HCT116 (cell line): ENCODE measurements at regions of chr3 and their contacts with region 1.

Region 1: GRCh38 chr3:132730891-132731580 is 8.8 kb upstream of the NPHP3 start:
- DNase-seq: no peak
- ATAC-seq: peak; percentile 90
- H3K4me3 ChIP-seq: no peak overlapping the region
- H3K27ac ChIP-seq: no peak overlapping the region
- H3K4me1 ChIP-seq: peaks cover 0 to 7% of the 10 kb centered on the region in 2 experiments; a peak in 2 of 4 replicates
- H3K27me3 ChIP-seq: peaks cover 57% of the 10 kb centered on the region
- CTCF ChIP-seq: peak; percentile 14 to 53 (median 47); a peak in 4 of 6 replicates
- POLR2A ChIP-seq: no peak
- RAD21 ChIP-seq: peak; percentile 80

Region 2: DNA sequence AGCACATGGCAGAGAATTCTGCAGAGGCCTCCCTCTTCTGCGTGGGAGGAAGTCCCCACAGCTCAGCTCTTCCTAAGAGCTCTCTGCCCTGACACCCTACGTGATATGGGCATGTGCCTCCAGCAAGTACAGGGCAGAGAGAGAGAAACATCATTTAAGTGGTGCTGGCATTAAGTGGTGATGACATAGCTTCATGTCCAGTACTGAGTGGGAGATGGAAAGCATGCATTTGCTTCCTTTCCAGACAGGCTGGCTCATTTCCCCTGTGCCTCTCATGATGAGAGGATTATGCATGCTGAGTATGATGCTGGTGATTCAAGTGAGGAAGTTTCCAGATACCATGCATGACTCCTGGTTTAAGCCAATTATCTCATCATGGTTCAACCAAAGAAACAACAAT is 695.7 kb after region 1 on chr3:
- CTCF ChIA-PET with region 1: interaction called, 25 read pairs
- POLR2A ChIA-PET with region 1: no interaction called
- RAD21 ChIA-PET with region 1: interaction called in 1 of 2 experiments, 3 read pairs
- intact Hi-C with region 1: loop called (anchors 1 kb)
- DNase-seq: no peak
- ATAC-seq: no peak
- H3K4me3 ChIP-seq: no peak overlapping the region
- H3K27ac ChIP-seq: no peak overlapping the region
- H3K4me1 ChIP-seq: peaks cover 0 to 3% of the 10 kb centered on the region in 2 experiments; a peak in 2 of 4 replicates
- H3K27me3 ChIP-seq: peaks cover 16% of the 10 kb centered on the region; the same call in 1 of the 2 replicates
- CTCF ChIP-seq: no peak
- POLR2A ChIP-seq: no peak
- RAD21 ChIP-seq: no peak

Region 3: DNA sequence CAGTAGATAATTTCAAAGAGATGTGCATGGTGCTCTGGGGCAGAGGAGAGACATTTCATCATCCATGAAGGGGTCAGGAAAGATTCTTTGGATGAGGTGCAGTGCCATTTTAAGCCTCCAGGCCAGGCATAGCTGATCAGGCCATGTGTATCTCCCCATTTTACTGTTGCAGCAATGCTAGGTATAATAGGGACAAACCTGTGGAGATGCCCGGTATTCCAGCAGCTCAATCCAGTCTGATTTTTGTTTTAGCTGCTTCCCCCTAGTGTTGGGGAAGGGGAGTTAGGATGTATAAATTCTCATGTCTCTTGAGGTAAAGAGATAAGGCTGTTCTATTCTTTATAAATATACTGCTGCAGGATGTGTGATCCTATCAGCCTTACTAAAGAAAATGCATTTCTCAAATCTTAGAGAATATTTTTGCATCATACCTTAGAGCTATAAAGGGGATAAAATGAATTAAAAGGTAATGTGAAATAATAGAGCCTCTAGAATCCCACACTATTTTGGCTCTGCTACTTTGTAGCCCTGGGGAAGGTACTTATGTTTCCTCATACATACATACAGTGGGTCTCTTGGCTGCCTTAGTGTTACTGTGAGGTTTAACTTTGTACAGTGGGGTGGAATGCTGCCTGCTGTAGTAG is 847.6 kb after region 1 on chr3:
- CTCF ChIA-PET with region 1: interaction called, 4 read pairs
- POLR2A ChIA-PET with region 1: no interaction called
- RAD21 ChIA-PET with region 1: no interaction called
- intact Hi-C with region 1: loop called (anchors 5 kb)
- DNase-seq: peak; percentile 59
- ATAC-seq: peak; percentile 69
- H3K4me3 ChIP-seq: no peak overlapping the region
- H3K27ac ChIP-seq: 0 out of 2 replicates have a peak overlapping the region, but pooled peaks have one; percentile 18
- H3K4me1 ChIP-seq: peaks cover 4 to 26% of the 10 kb centered on the region in 2 experiments; a peak in 3 of 4 replicates
- H3K27me3 ChIP-seq: no peaks in the 10 kb centered on the region
- CTCF ChIP-seq: peak; percentile 62 to 74 (median 63); a peak in 5 of 6 replicates
- POLR2A ChIP-seq: no peak
- RAD21 ChIP-seq: peak; percentile 70

Region 4: DNA sequence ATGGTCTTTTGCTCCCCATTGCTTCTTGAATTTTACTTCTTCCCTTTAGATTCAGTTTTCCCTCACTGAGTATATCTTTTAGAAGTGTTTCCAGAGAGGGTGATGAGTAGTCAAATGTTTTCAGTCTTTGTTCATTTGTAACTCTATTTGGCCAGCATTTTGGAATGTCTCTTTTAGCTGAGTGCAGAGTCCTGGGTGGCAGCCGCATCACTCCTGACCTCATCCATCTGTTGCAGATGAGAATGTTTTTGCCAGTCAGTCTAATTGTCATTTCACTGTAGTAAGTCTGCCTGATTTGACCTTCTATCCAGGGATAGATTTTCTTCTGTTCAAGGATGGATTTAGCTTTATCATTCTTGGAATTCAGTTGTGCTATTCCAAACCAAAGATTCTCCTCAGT is 1081.8 kb after region 1 on chr3:
- CTCF ChIA-PET with region 1: no interaction called
- POLR2A ChIA-PET with region 1: no interaction called
- RAD21 ChIA-PET with region 1: no interaction called
- intact Hi-C with region 1: loop called (anchors 5 kb)
- DNase-seq: no peak
- ATAC-seq: no peak
- H3K4me3 ChIP-seq: no peak overlapping the region
- H3K27ac ChIP-seq: no peak overlapping the region
- H3K4me1 ChIP-seq: no peaks in the 10 kb centered on the region
- H3K27me3 ChIP-seq: no peaks in the 10 kb centered on the region
- CTCF ChIP-seq: no peak
- POLR2A ChIP-seq: no peak
- RAD21 ChIP-seq: no peak

Region 5: GRCh38 chr3:134299185-134299887 is 1568.3 kb after region 1 on chr3:
- CTCF ChIA-PET with region 1: no interaction called
- POLR2A ChIA-PET with region 1: no interaction called
- RAD21 ChIA-PET with region 1: no interaction called
- intact Hi-C with region 1: loop called (anchors 5 kb)
- DNase-seq: no peak
- ATAC-seq: peak; percentile 47
- H3K4me3 ChIP-seq: no peak overlapping the region
- H3K27ac ChIP-seq: no peak overlapping the region
- H3K4me1 ChIP-seq: no peaks in the 10 kb centered on the region
- H3K27me3 ChIP-seq: no peaks in the 10 kb centered on the region
- CTCF ChIP-seq: peak in 1 of 3 experiments; percentile 29; a peak in 1 of 6 replicates
- POLR2A ChIP-seq: no peak
- RAD21 ChIP-seq: peak; percentile 62